H1 (cell line): ENCODE measurements at regions of chr19 and their contacts with region 1.

Region 1: GRCh38 chr19:29714953-29715700 is at the start of gene C19orf12:
- DNase-seq: peak in 1 of 2 experiments; percentile 77
- H3K4me3 ChIP-seq: peak within 1 kb of the TSS; percentile 62 to 75 (median 66)
- H3K27ac ChIP-seq: peak within 1 kb of the TSS; percentile 47; the same call in 1 of the 2 replicates
- H3K4me1 ChIP-seq: peaks cover 0 to 4% (median 2%) of the 10 kb centered on the region in 4 experiments; a peak in 3 of 7 replicates
- H3K27me3 ChIP-seq: no peaks in the 10 kb centered on the region
- CTCF ChIP-seq: no peak
- EP300 ChIP-seq: no peak
- POLR2A ChIP-seq: peak in 1 of 2 experiments; percentile 71; a peak in 2 of 3 replicates
- RAD21 ChIP-seq: no peak
- total RNA-seq, gene C19orf12: 11.9 and 14.5 TPM in 2 replicates

Region 2: GRCh38 chr19:29694669-29695627 is 20.2 kb before region 1 on chr19:
- CTCF ChIA-PET with region 1: interaction called, 18 read pairs
- POLR2A ChIA-PET with region 1: interaction called, 3 read pairs
- DNase-seq: peak; percentile 43 to 92
- H3K4me3 ChIP-seq: no peak overlapping the region
- H3K27ac ChIP-seq: no peak overlapping the region
- H3K4me1 ChIP-seq: peaks cover 0 to 4% (median 1%) of the 10 kb centered on the region in 4 experiments; a peak in 2 of 7 replicates
- H3K27me3 ChIP-seq: no peaks in the 10 kb centered on the region
- CTCF ChIP-seq: peak; percentile 94 to 97 (median 97)
- EP300 ChIP-seq: no peak
- POLR2A ChIP-seq: no peak
- RAD21 ChIP-seq: peak; percentile 86 to 94

Region 3: DNA sequence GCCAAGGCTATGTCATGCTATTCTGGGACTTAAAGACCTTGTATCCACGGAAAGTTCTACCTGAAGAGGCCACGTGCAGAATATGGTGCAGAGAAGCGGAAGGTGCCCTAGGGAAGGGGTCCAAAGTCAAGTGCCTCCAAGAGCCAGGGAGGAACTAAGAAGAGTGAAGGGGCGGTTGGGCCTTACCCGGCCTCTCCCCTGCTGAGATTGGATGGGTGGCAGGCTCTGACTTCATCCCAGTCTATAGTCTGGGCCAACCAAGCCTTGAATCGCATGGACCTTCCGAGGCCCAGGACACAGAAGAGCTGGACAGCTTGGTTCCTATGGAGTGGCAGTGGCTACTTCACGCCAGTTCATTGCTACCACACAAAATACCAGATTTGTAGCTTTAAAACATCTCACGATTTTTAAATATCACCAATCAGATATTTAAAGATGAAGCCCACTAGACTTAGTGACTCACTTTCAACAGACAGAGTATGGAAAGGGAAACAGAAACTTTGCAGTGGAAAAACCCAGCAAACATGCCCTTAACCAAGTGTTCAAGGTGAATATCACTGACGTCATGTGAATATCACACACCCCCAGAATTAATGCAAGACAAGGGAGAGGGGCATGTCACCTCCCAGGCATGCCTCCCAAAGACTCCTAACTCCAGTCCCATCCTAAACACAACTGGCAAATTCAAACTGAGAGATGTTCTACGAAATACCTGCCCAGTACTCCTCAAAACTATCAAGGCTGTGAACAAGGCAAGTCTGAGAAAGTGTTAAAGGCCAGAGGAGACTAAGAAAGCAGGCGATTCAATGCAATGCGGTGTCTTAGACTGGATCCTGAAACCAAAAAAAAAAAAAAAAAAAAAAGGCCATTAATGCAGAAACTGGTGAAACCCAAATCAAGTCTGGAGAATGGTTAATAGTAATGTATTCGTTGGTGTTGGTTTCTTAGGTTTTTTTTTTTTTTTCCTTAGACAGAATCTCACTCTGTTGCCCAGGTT is 10.3 kb before region 1 on chr19:
- CTCF ChIA-PET with region 1: interaction called, 13 read pairs
- POLR2A ChIA-PET with region 1: interaction called, 16 read pairs
- DNase-seq: no peak
- H3K4me3 ChIP-seq: no peak overlapping the region
- H3K27ac ChIP-seq: no peak overlapping the region
- H3K4me1 ChIP-seq: no peaks in the 10 kb centered on the region; a peak in 1 of 7 replicates
- H3K27me3 ChIP-seq: no peaks in the 10 kb centered on the region
- CTCF ChIP-seq: no peak
- EP300 ChIP-seq: no peak
- POLR2A ChIP-seq: no peak
- RAD21 ChIP-seq: no peak

Region 4: GRCh38 chr19:29811125-29812079 is 96.3 kb after region 1 on chr19 and contains the start of gene CCNE1:
- CTCF ChIA-PET with region 1: no interaction called
- POLR2A ChIA-PET with region 1: no interaction called
- DNase-seq: peak in 1 of 2 experiments; percentile 94
- H3K4me3 ChIP-seq: peak within 1 kb of the TSS; percentile 46 to 81 (median 54)
- H3K27ac ChIP-seq: no peak within 1 kb of the TSS; the same call in 1 of the 2 replicates
- H3K4me1 ChIP-seq: peaks cover 0 to 6% (median 2%) of the 10 kb centered on the region in 4 experiments; a peak in 3 of 7 replicates
- H3K27me3 ChIP-seq: peaks cover 0 to 6% (median 2%) of the 10 kb centered on the region in 4 experiments; a peak in 1 of 7 replicates
- CTCF ChIP-seq: no peak
- EP300 ChIP-seq: no peak
- POLR2A ChIP-seq: no peak; a peak in 1 of 3 replicates
- RAD21 ChIP-seq: no peak
- total RNA-seq, gene CCNE1: 41.2 and 43.2 TPM in 2 replicates